ENCODE measurements at regions of chr4 and their contacts with region 1.

Region 1: GRCh38 chr4:174398728-174399127 is 115.0 kb downstream of the CEP44 start:
- DNase-seq: no peak
- H3K4me3 ChIP-seq: no peak overlapping the region
- H3K27ac ChIP-seq: no peak overlapping the region
- H3K4me1 ChIP-seq: no peaks in the 10 kb centered on the region
- H3K27me3 ChIP-seq: no peaks in the 10 kb centered on the region
- CTCF ChIP-seq: no peak
- POLR2A ChIP-seq: no peak

Region 2: GRCh38 chr4:173807347-173807746 is 591.4 kb before region 1 on chr4:
- intact Hi-C with region 1: no loop called
- DNase-seq: no peak
- H3K4me3 ChIP-seq: no peak overlapping the region
- H3K27ac ChIP-seq: no peak overlapping the region
- H3K4me1 ChIP-seq: no peaks in the 10 kb centered on the region
- H3K27me3 ChIP-seq: no peaks in the 10 kb centered on the region
- CTCF ChIP-seq: no peak
- POLR2A ChIP-seq: no peak

Region 3: GRCh38 chr4:173990126-173990868 is 408.4 kb before region 1 on chr4:
- intact Hi-C with region 1: no loop called
- DNase-seq: no peak
- H3K4me3 ChIP-seq: no peak overlapping the region
- H3K27ac ChIP-seq: no peak overlapping the region
- H3K4me1 ChIP-seq: no peaks in the 10 kb centered on the region
- H3K27me3 ChIP-seq: no peaks in the 10 kb centered on the region
- CTCF ChIP-seq: no peak
- POLR2A ChIP-seq: no peak

Region 4: GRCh38 chr4:174522183-174523048 is 123.7 kb after region 1 on chr4 and contains the start of gene HPGD:
- intact Hi-C with region 1: loop called (anchors 10 kb)
- DNase-seq: peak; percentile 44
- H3K4me3 ChIP-seq: peak within 1 kb of the TSS; percentile 50 to 55
- H3K27ac ChIP-seq: peak within 1 kb of the TSS; percentile 28 to 44
- H3K4me1 ChIP-seq: no peaks in the 10 kb centered on the region
- H3K27me3 ChIP-seq: no peaks in the 10 kb centered on the region
- CTCF ChIP-seq: no peak
- POLR2A ChIP-seq: no peak
- total RNA-seq, gene HPGD: 6.5 to 37.7 TPM

Measured in prostate gland (tissue), 2 donors.